Activated T-helper 2 cell treated with anti-CD3 and anti-CD28 coated beads, Interferon-gamma antibody, Interleukin-2, Interleukin-4, amounts not matched to agents 10 μg/mL and 5 μg/mL and 100 μg/mL, durations not matched to agents 14 hours and 24 hours and 36 hours (primary cell): ENCODE measurements at regions of chr5 and their contacts with region 1.

Region 1: DNA sequence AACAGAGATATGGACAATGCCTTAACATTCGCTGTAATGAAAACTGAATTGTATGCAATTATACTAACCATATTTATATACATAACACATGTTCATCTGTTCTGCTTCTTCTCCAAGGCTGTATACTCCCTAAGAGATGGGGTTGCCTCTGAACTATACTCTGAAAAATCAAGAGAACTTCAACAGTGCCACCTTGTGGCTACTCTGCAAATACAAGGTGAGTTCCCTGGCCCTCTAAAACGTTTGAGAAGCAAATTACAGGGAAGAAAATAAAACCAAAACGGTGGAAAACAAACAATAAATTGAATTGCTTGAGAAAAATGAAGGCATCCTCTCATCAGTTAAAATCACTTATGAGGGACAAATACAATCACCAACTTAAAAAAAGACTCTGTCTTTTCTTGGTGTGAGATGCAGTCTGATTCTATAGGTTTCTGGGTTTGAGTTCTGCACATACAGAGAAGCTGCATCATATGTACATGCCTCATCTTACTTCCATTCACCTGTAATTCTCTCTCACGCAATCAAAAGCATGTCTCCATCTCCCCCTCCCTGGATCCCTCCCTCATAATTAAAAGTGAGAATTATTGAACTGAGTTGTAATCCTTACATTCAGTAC is 98.6 kb downstream of the FBXW11 start:
- DNase-seq: peak; percentile 22
- H3K4me3 Mint-ChIP-seq: no peak overlapping the region
- H3K27ac Mint-ChIP-seq: peak overlapping the region; percentile 38
- H3K4me1 Mint-ChIP-seq: peaks cover 47% of the 10 kb centered on the region
- H3K27me3 Mint-ChIP-seq: no peaks in the 10 kb centered on the region

Region 2: DNA sequence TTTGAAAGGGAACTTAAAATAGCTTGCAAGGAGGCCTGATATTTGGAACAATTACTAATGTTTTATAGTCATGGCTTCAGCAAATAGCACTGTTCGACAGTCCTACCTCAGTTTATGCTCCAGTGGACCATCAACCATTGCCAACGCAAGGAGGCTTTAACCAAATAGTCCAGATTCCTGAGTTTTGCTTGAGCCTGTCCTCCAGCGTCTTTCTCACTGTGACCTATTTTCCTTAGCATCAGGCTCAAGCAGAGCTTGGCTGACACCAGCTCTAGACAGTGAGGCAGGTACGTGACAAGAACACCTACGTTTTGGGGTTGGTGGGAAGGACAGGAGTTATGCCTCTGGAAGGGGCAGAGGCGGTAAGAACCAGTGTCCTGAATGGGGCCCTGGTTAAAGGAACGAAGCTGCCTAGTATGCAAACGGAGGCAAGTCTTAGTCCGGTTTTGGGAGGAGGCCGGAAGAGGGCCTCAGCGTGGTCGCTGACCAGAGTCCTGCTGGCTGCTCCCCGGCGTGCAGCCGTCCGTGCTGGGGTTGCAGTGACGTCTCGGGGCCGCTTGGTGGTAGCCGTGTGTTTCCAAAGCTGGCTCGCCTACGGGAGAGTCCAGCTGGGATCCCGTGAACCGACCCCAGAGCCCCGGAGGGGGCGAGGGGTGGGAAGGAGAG is 489.4 kb before region 1 on chr5:
- intact Hi-C with region 1: loop called (anchors 1 kb)
- DNase-seq: peak; percentile 51
- H3K4me3 Mint-ChIP-seq: peak overlapping the region; percentile 71
- H3K27ac Mint-ChIP-seq: no peak overlapping the region
- H3K4me1 Mint-ChIP-seq: peaks cover 5% of the 10 kb centered on the region
- H3K27me3 Mint-ChIP-seq: peaks cover 27% of the 10 kb centered on the region

Region 3: GRCh38 chr5:171882118-171882517 is 25.7 kb before region 1 on chr5:
- intact Hi-C with region 1: loop called (anchors 2 kb)
- DNase-seq: no peak
- H3K4me3 Mint-ChIP-seq: no peak overlapping the region
- H3K27ac Mint-ChIP-seq: no peak overlapping the region
- H3K4me1 Mint-ChIP-seq: peaks cover 9% of the 10 kb centered on the region
- H3K27me3 Mint-ChIP-seq: no peaks in the 10 kb centered on the region

Region 4: DNA sequence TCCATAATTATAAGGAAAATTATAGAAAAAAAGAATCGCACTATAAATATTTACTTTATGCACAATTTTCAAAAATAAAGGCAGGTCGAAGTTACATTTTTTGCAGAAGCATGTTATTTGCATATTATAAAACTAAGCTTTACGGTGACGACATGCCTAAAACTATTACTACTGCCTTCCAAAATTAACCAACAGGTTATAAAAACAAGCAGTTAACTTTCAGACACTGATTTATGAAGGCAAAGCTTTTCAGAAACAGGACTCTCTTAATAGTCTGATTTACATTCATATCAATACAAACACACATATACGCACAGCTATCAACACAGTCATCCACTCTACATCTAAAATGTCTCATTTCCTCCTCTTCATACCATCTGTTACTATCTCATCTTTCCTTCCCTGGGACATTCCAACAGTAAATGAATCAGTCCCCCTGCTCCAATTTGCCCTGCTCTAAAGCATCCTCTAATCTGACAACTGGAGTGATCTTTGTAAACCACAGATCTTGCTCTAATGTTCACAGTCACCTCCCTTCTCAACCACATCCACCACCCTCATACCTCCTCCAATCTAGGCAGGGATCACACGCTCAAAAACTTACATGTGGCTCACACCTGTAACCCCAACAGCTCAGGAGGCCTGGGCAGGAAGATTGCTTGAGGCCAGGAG is 77.0 kb after region 1 on chr5:
- intact Hi-C with region 1: loop called (anchors 1 kb)
- DNase-seq: no peak
- H3K4me3 Mint-ChIP-seq: no peak overlapping the region
- H3K27ac Mint-ChIP-seq: peak overlapping the region; percentile 51
- H3K4me1 Mint-ChIP-seq: peaks cover 38% of the 10 kb centered on the region
- H3K27me3 Mint-ChIP-seq: no peaks in the 10 kb centered on the region

Region 5: GRCh38 chr5:172035039-172035438 is 127.2 kb after region 1 on chr5:
- intact Hi-C with region 1: loop called (anchors 1 kb)
- DNase-seq: no peak
- H3K4me3 Mint-ChIP-seq: no peak overlapping the region
- H3K27ac Mint-ChIP-seq: no peak overlapping the region
- H3K4me1 Mint-ChIP-seq: peaks cover 10% of the 10 kb centered on the region
- H3K27me3 Mint-ChIP-seq: no peaks in the 10 kb centered on the region

Region 6: DNA sequence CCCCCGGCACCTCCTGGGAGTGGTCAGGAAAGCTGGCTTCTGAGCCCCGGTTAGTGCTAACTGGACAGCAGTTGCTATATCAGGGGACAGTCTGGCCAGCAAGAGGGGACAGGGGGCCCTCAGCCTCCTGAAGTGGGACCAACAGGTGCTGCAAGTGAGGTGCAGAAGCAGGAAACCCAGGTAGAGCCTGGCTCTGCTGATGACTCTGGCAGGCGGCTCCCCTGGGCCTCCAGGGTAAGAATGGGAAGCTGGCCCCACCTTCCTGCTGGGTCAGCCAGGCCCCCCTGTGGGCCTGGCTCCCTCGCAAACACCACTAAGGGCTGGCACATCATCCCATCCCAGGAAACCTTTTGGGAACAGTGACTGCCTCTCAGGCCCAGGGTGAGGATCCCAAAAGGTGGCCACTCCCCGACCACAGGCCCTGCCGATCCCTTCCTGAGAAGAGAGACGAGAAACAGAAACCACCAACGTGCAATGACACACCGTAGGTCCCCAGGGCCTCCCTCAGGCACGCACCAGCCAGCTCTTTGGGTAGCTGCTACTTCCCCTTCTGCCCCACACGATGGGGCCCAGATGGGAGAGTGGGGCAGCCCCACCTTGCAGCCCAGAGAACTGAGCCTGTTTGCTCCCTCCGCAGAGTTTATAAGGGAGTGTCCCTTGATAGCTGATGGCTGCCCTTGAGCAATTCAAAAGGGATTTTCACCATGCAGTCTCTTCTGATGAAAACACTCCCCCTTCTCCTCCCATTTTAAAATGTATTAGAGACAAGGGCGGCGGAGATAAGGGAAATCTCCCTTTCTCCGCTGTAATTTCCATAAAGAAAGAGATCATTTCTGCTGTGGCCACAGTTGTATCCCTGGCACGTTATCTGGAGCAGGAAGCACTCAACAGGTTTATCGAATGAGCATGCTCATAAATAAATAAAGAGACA is 203.4 kb after region 1 on chr5:
- intact Hi-C with region 1: no loop called
- DNase-seq: peak; percentile 76
- H3K4me3 Mint-ChIP-seq: peak overlapping the region; percentile 60
- H3K27ac Mint-ChIP-seq: peak overlapping the region; percentile 91
- H3K4me1 Mint-ChIP-seq: peaks cover 76% of the 10 kb centered on the region
- H3K27me3 Mint-ChIP-seq: no peaks in the 10 kb centered on the region

Region 7: DNA sequence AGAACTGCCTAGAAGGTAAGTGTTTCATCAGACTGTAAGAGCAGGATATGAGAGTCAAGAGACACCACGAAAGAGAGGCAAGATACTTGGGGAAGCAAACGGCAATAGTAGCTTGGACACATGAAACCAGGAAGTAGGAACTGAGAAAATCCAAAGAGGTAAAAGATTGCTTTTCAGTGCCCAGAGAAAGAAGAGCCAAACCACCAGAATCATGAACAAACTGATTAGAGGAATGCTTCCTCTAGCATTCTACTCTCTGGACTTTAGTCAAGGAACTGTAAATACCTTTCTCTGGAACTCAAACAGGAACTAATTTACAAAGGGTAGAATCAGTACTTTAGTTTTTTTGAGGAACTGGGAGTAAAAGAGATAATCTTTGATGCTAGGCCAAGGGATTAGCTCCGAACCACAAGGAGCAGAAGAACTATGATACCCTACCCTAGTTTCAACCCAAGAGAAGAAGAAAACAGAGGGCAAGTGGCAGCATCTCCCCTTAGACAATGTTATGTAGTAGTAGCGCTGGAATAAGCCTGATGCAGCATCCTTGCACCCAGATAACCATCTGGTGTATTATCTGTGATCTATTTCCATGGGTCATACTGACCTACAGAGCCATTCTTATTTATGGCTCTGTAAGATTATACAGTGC is 327.4 kb after region 1 on chr5:
- intact Hi-C with region 1: loop called (anchors 5 kb)
- DNase-seq: no peak
- H3K4me3 Mint-ChIP-seq: no peak overlapping the region
- H3K27ac Mint-ChIP-seq: no peak overlapping the region
- H3K4me1 Mint-ChIP-seq: peaks cover 43% of the 10 kb centered on the region
- H3K27me3 Mint-ChIP-seq: peaks cover 6% of the 10 kb centered on the region